ENCODE measurements at regions of chr19 and their contacts with region 1.

Region 1: DNA sequence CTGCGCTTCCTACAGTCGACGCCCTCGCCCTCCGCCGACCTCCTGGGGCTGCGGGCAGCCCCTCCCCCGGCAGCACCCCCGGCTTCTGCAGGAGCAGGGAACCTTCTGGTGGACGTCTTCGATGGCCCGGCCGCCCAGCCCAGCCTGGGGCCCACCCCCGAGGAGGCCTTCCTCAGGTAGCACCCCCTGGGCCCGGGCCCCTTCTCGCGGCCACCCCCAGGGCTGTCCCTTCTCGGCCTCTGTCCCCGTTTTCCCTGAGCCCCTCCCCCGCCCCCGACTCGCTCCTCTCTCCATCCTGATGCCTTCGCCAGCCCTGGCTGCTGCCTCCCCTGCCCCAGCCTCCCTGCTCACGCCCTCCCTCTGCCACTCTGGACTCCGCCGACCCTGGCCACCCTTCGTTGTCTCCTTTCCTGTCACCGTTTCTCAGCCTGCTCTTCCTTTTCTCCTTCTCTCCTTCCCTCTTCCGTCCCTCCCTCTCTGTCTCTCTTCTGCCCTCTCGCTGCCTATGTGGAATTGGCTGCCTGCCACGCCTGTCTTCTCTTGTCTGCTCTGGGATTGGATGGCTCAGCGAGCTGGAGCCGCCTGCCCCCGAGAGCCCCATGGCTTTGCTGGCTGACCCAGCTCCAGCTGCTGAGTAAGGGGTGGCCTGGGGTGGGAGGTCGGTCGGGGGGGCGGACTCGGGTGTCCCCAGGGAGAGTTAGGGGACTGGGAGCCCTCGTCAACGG is 11.0 kb downstream of the FUZ start:
- DNase-seq: peak; percentile 96
- H3K4me3 ChIP-seq: peak overlapping the region; percentile 43 to 58 (median 52)
- H3K27ac ChIP-seq: peak overlapping the region; percentile 61 to 76 (median 70)
- H3K4me1 ChIP-seq: peaks cover 13 to 32% (median 22%) of the 10 kb centered on the region in 4 donors
- H3K27me3 ChIP-seq: no peaks in the 10 kb centered on the region
- CTCF ChIP-seq: peak; percentile 35 to 58 (median 44)
- EP300 ChIP-seq: no peak
- POLR2A ChIP-seq: no peak

Region 2: GRCh38 chr19:49766007-49766937 is 35.9 kb before region 1 on chr19:
- intact Hi-C with region 1: loop called (anchors 5 kb)
- DNase-seq: peak; percentile 100
- H3K4me3 ChIP-seq: peak overlapping the region; percentile 84 to 93 (median 89)
- H3K27ac ChIP-seq: peak overlapping the region; percentile 89 to 93 (median 90)
- H3K4me1 ChIP-seq: peaks cover 35 to 43% (median 38%) of the 10 kb centered on the region in 4 donors
- H3K27me3 ChIP-seq: no peaks in the 10 kb centered on the region
- CTCF ChIP-seq: no peak
- EP300 ChIP-seq: no peak
- POLR2A ChIP-seq: peak; percentile 53